ENCODE measurements at regions of chr3 and their contacts with region 1.

Region 1: GRCh38 chr3:169091216-169091823 is 572.2 kb downstream of the MECOM start:
- DNase-seq: no peak
- H3K4me3 ChIP-seq: no peak overlapping the region
- H3K4me3 Mint-ChIP-seq: no peak overlapping the region
- H3K27ac Mint-ChIP-seq: no peak overlapping the region
- H3K4me1 ChIP-seq: no peaks in the 10 kb centered on the region
- H3K4me1 Mint-ChIP-seq: no peaks in the 10 kb centered on the region
- H3K27me3 ChIP-seq: no peaks in the 10 kb centered on the region
- H3K27me3 Mint-ChIP-seq: no peaks in the 10 kb centered on the region
- CTCF ChIP-seq: no peak

Region 2: GRCh38 chr3:169120928-169121327 is 29.6 kb after region 1 on chr3:
- CTCF ChIA-PET with region 1: no interaction called
- POLR2A ChIA-PET with region 1: no interaction called
- intact Hi-C with region 1: loop called (anchors 1 kb)
- DNase-seq: no peak
- H3K4me3 ChIP-seq: no peak overlapping the region
- H3K4me3 Mint-ChIP-seq: no peak overlapping the region
- H3K27ac Mint-ChIP-seq: no peak overlapping the region
- H3K4me1 ChIP-seq: peaks cover 8% of the 10 kb centered on the region; the same call in 1 of the 2 replicates
- H3K4me1 Mint-ChIP-seq: peaks cover 16% of the 10 kb centered on the region
- H3K27me3 ChIP-seq: no peaks in the 10 kb centered on the region
- H3K27me3 Mint-ChIP-seq: no peaks in the 10 kb centered on the region
- CTCF ChIP-seq: no peak